Naive thymus-derived CD4-positive, alpha-beta T cell (primary cell): ENCODE measurements at regions of chr4 and their contacts with region 1.

Region 1: DNA sequence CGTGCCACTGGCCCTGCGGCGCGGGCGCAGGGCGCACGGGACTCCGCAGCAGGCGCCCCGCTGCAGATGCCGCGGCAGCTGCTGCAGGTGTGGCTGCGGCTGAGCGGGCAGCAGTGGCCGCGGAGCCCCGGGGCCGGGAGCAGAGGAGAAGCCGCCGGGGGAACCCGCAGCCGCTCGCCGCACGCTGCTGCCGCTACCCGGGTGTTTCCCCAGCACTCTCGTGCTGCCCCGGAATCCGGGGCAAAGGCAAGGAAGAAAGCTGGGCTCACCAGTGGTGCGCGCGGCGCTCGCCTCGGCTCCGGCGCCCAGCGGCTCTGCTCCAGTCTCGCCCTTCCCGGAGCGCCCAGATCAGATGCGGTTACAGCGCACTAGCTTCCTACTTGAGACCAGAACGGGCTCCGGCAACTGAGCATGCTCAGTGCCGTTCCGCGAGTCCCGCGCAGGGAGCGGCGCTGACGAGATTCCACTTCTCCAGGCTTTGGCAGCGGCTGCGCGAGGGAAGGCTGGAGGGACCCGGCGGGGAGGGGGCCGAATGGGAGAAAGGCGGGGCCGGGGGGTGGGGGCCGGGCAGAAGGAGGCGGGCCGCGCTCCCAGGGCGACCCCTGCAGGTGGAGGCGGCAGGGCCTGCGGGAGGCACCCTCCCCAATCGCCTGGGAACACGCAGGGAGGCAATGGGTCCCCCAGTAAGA is at the start of gene APBB2:
- DNase-seq: peak in 4 of 9 donors; percentile 8 to 63 (median 16)
- ATAC-seq: peak; percentile 69
- H3K4me3 ChIP-seq: no peak within 1 kb of the TSS
- H3K4me3 Mint-ChIP-seq: peak within 1 kb of the TSS; percentile 48 to 88 (median 77)
- H3K27ac ChIP-seq: no peak within 1 kb of the TSS
- H3K27ac Mint-ChIP-seq: no peak within 1 kb of the TSS
- H3K4me1 ChIP-seq: peaks cover 0 to 3% of the 10 kb centered on the region in 2 donors
- H3K4me1 Mint-ChIP-seq: peaks cover 12 to 35% (median 26%) of the 10 kb centered on the region in 7 donors
- H3K27me3 ChIP-seq: peaks cover 4 to 14% of the 10 kb centered on the region in 2 donors
- H3K27me3 Mint-ChIP-seq: peaks cover 51 to 65% (median 55%) of the 10 kb centered on the region in 5 donors
- total RNA-seq, gene APBB2: 0.42 to 1.5 (median 0.59) TPM

Region 2: DNA sequence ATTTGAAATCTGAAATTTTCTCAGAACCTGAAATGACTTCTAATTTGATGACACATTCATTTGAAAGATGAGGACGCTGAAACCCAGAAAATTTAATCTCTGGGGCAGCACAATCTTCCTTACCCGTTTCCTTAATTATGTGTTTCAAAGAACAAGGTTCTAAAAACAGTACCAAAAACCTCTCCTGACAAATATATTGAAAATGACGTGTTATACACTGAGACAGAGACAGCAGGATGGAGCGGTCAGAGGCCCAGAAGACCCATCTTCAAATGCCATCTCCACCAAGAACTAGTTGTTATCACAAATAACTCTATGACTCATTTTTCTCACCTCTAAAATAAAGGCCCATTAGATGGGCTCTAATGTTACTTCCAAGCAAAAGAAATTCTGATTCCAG is 287.2 kb before region 1 on chr4:
- CTCF ChIA-PET with region 1: no interaction called
- POLR2A ChIA-PET with region 1: no interaction called
- intact Hi-C with region 1: loop called (anchors 1 to 2 kb)
- DNase-seq: no peak
- ATAC-seq: no peak
- H3K4me3 ChIP-seq: no peak overlapping the region
- H3K4me3 Mint-ChIP-seq: no peak overlapping the region
- H3K27ac ChIP-seq: no peak overlapping the region
- H3K27ac Mint-ChIP-seq: no peak overlapping the region
- H3K4me1 ChIP-seq: no peaks in the 10 kb centered on the region
- H3K4me1 Mint-ChIP-seq: peaks cover 0 to 6% (median 3%) of the 10 kb centered on the region in 7 donors
- H3K27me3 ChIP-seq: peaks cover 0 to 5% of the 10 kb centered on the region in 2 donors
- H3K27me3 Mint-ChIP-seq: peaks cover 6 to 24% (median 20%) of the 10 kb centered on the region in 5 donors

Region 3: GRCh38 chr4:40976343-40976742 is 237.9 kb before region 1 on chr4:
- CTCF ChIA-PET with region 1: interaction called, 3 read pairs
- POLR2A ChIA-PET with region 1: no interaction called
- intact Hi-C with region 1: loop called in 1 of 2 experiments (anchors 1 kb)
- DNase-seq: no peak
- ATAC-seq: no peak
- H3K4me3 ChIP-seq: no peak overlapping the region
- H3K4me3 Mint-ChIP-seq: no peak overlapping the region
- H3K27ac ChIP-seq: no peak overlapping the region
- H3K27ac Mint-ChIP-seq: no peak overlapping the region
- H3K4me1 ChIP-seq: no peaks in the 10 kb centered on the region
- H3K4me1 Mint-ChIP-seq: no peaks in the 10 kb centered on the region
- H3K27me3 ChIP-seq: no peaks in the 10 kb centered on the region
- H3K27me3 Mint-ChIP-seq: peaks cover 2 to 25% (median 14%) of the 10 kb centered on the region in 5 donors

Region 4: GRCh38 chr4:42048407-42048806 is 834.1 kb after region 1 on chr4:
- CTCF ChIA-PET with region 1: no interaction called
- POLR2A ChIA-PET with region 1: no interaction called
- intact Hi-C with region 1: no loop called
- DNase-seq: no peak
- ATAC-seq: no peak
- H3K4me3 ChIP-seq: no peak overlapping the region
- H3K4me3 Mint-ChIP-seq: no peak overlapping the region
- H3K27ac ChIP-seq: no peak overlapping the region
- H3K27ac Mint-ChIP-seq: peak overlapping the region in 1 of 9 donors; percentile 59
- H3K4me1 ChIP-seq: no peaks in the 10 kb centered on the region
- H3K4me1 Mint-ChIP-seq: peaks cover 0 to 9% (median 0%) of the 10 kb centered on the region in 7 donors
- H3K27me3 ChIP-seq: no peaks in the 10 kb centered on the region
- H3K27me3 Mint-ChIP-seq: no peaks in the 10 kb centered on the region